ENCODE measurements at regions of chr19 and their contacts with region 1.

Region 1: GRCh38 chr19:41746593-41747227 is 8.6 kb upstream of the CEACAM6 start:
- DNase-seq: peak; percentile 84 to 87
- ATAC-seq: peak; percentile 90 to 98
- H3K4me3 ChIP-seq: no peak overlapping the region
- H3K27ac ChIP-seq: no peak overlapping the region
- H3K4me1 ChIP-seq: no peaks in the 10 kb centered on the region
- CTCF ChIP-seq: peak; percentile 96
- EP300 ChIP-seq: no peak
- POLR2A ChIP-seq: no peak
- RAD21 ChIP-seq: peak; percentile 94 to 96

Region 2: DNA sequence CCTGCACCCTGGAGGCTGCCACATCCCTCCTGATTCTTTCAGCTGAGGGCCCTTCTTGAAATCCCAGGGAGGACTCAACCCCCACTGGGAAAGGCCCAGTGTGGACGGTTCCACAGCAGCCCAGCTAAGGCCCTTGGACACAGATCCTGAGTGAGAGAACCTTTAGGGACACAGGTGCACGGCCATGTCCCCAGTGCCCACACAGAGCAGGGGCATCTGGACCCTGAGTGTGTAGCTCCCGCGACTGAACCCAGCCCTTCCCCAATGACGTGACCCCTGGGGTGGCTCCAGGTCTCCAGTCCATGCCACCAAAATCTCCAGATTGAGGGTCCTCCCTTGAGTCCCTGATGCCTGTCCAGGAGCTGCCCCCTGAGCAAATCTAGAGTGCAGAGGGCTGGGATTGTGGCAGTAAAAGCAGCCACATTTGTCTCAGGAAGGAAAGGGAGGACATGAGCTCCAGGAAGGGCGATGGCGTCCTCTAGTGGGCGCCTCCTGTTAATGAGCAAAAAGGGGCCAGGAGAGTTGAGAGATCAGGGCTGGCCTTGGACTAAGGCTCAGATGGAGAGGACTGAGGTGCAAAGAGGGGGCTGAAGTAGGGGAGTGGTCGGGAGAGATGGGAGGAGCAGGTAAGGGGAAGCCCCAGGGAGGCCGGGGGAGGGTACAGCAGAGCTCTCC is 45.2 kb before region 1 on chr19:
- CTCF ChIA-PET with region 1: interaction called, 128 read pairs
- POLR2A ChIA-PET with region 1: no interaction called
- DNase-seq: peak; percentile 58 to 71
- ATAC-seq: peak; percentile 5 to 9; a peak in 4 of 6 replicates
- H3K4me3 ChIP-seq: no peak overlapping the region
- H3K27ac ChIP-seq: peak overlapping the region; percentile 71 to 86
- H3K4me1 ChIP-seq: peaks cover 68% of the 10 kb centered on the region
- CTCF ChIP-seq: peak; percentile 59
- EP300 ChIP-seq: no peak
- POLR2A ChIP-seq: no peak
- RAD21 ChIP-seq: peak; percentile 43 to 73; a peak in 4 of 5 replicates

Region 3: GRCh38 chr19:41726493-41726892 is 20.2 kb before region 1 on chr19:
- CTCF ChIA-PET with region 1: interaction called, 102 read pairs
- POLR2A ChIA-PET with region 1: no interaction called
- DNase-seq: no peak
- ATAC-seq: peak in 1 of 2 experiments; percentile 43; a peak in 2 of 6 replicates
- H3K4me3 ChIP-seq: no peak overlapping the region
- H3K27ac ChIP-seq: no peak overlapping the region
- H3K4me1 ChIP-seq: no peaks in the 10 kb centered on the region
- CTCF ChIP-seq: no peak
- EP300 ChIP-seq: no peak
- POLR2A ChIP-seq: no peak
- RAD21 ChIP-seq: no peak

Region 4: GRCh38 chr19:41775360-41775695 is 28.6 kb after region 1 on chr19:
- CTCF ChIA-PET with region 1: interaction called, 474 read pairs
- POLR2A ChIA-PET with region 1: no interaction called
- DNase-seq: peak in 1 of 2 experiments; percentile 50
- ATAC-seq: no peak
- H3K4me3 ChIP-seq: no peak overlapping the region
- H3K27ac ChIP-seq: no peak overlapping the region
- H3K4me1 ChIP-seq: peaks cover 5% of the 10 kb centered on the region; the same call in 2 of the 3 replicates
- CTCF ChIP-seq: no peak
- EP300 ChIP-seq: no peak
- POLR2A ChIP-seq: no peak
- RAD21 ChIP-seq: no peak

Region 5: GRCh38 chr19:41795031-41795461 is 48.3 kb after region 1 on chr19:
- CTCF ChIA-PET with region 1: interaction called, 196 read pairs
- POLR2A ChIA-PET with region 1: no interaction called
- DNase-seq: peak; percentile 49 to 70
- ATAC-seq: peak; percentile 61 to 89
- H3K4me3 ChIP-seq: no peak overlapping the region
- H3K27ac ChIP-seq: no peak overlapping the region
- H3K4me1 ChIP-seq: 0 out of 3 replicates have a peak, but pooled peaks cover 11% of the 10 kb centered on the region
- CTCF ChIP-seq: peak; percentile 96
- EP300 ChIP-seq: no peak
- POLR2A ChIP-seq: no peak
- RAD21 ChIP-seq: peak; percentile 32 to 47; a peak in 4 of 5 replicates

Region 6: DNA sequence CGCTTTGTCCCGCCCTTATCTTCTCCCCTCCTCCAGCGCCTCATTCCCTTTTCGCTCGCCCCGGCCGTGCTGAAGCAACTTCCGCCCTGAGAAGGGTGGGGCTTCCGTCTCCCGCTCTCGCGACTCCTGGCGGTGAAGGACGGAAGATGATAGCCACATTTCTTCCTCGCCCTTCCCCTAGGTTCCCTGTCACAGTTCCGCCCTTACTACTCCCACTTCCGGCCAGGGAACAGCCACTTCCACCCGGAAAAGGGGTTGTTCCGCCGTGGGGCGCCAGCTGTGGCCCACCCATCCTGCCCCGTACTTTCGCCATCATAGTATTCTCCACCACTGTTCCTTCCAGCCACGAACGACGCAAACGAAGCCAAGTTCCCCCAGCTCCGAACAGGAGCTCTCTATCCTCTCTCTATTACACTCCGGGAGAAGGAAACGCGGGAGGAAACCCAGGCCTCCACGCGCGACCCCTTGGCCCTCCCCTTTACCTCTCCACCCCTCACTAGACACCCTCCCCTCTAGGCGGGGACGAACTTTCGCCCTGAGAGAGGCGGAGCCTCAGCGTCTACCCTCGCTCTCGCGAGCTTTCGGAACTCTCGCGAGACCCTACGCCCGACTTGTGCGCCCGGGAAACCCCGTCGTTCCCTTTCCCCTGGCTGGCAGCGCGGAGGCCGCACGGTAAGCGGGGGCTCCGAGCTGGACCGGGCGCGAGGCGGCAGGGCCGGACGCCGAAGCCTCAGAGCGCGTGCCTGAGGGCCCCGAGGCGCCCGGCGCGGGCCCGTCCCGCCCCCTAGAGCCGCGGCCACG is 113.1 kb after region 1 on chr19 and contains the start of gene RPS19:
- CTCF ChIA-PET with region 1: no interaction called
- POLR2A ChIA-PET with region 1: no interaction called
- DNase-seq: peak; percentile 100
- ATAC-seq: peak; percentile 86 to 92
- H3K4me3 ChIP-seq: peak within 1 kb of the TSS; percentile 89
- H3K27ac ChIP-seq: peak within 1 kb of the TSS; percentile 90 to 95
- H3K4me1 ChIP-seq: peaks cover 40% of the 10 kb centered on the region
- CTCF ChIP-seq: peak; percentile 56
- EP300 ChIP-seq: peak in 1 of 2 experiments; percentile 13; a peak in 1 of 5 replicates
- POLR2A ChIP-seq: peak; percentile 95
- RAD21 ChIP-seq: no peak; a peak in 1 of 5 replicates
- polyA plus RNA-seq, gene RPS19: 2,749 and 3,564 TPM in 2 replicates

Region 7: GRCh38 chr19:41895745-41896580 is 149.3 kb after region 1 on chr19:
- CTCF ChIA-PET with region 1: no interaction called
- POLR2A ChIA-PET with region 1: no interaction called
- DNase-seq: peak; percentile 72 to 79
- ATAC-seq: peak; percentile 77 to 89
- H3K4me3 ChIP-seq: no peak overlapping the region
- H3K27ac ChIP-seq: peak overlapping the region in 1 of 2 experiments; percentile 52; a peak in 2 of 6 replicates
- H3K4me1 ChIP-seq: peaks cover 14% of the 10 kb centered on the region; the same call in 2 of the 3 replicates
- CTCF ChIP-seq: peak; percentile 45
- EP300 ChIP-seq: no peak
- POLR2A ChIP-seq: no peak
- RAD21 ChIP-seq: no peak